Calu3 (cell line): ENCODE measurements at regions of chr5 and their contacts with region 1.

Region 1: DNA sequence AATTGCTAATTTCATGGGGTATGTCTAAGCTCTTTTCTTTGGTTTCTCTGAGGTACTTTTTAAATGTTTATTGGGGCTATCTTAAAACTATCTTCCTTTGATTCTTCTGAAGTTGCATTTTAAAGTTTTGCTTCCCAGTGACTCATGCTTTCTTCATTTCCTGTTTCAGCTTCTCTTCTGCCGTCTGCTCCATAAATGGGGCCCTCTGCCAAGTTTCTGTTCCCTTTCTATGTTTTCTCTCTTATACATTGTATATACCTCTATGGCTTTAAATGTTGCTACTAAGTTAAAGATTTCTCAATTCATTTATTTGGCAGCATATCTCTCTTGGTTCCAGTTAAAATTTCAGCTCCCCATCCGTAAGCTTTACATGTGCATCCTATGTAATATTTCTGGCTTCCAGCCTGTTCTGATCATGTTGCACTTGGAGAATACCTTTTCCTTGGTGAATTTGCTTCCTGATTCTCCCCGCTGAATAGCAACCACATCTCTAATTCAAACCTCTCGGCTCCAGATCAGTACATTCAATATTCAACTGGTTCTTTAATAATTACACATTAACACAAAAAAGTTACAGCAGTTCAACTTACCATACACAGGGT is 125.3 kb downstream of the ST8SIA4 start:
- DNase-seq: peak; percentile 47
- H3K4me3 Mint-ChIP-seq: peak overlapping the region; percentile 41
- H3K27ac Mint-ChIP-seq: peak overlapping the region; percentile 89
- H3K4me1 Mint-ChIP-seq: peaks cover 33% of the 10 kb centered on the region
- H3K27me3 Mint-ChIP-seq: no peaks in the 10 kb centered on the region
- CTCF ChIP-seq: no peak

Region 2: DNA sequence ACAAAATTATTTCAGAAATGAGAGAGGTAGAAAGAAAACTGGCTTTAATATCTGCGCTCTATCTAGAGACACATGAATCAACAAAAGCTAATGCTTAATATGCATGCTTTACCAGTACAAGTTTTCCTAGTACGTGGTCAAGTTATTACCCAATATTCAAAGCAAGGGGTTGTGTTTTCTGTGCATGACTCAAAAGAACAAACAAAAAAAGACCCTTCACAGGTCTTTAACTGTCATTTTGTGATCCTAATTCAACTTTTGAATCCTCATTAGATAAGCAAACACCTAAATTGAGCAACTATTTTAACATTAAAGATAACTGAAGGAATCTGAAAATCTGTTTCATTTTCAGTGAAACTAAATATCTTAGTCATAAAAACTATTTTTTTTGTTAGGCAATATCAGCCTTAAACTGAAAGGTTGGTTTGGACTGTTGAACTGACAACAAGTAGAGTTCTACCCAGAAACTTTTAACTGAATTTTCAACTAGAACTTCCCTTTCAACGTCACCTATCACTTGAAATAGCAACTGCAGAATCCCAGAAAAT is 112.8 kb after region 1 on chr5:
- CTCF ChIA-PET with region 1: no interaction called
- intact Hi-C with region 1: loop called (anchors 5 kb)
- DNase-seq: no peak
- H3K4me3 Mint-ChIP-seq: peak overlapping the region; percentile 15
- H3K27ac Mint-ChIP-seq: peak overlapping the region; percentile 51
- H3K4me1 Mint-ChIP-seq: no peaks in the 10 kb centered on the region
- H3K27me3 Mint-ChIP-seq: no peaks in the 10 kb centered on the region
- CTCF ChIP-seq: no peak